GM12878 (cell line): ENCODE measurements at regions of chr3 and their contacts with region 1.

Region 1: DNA sequence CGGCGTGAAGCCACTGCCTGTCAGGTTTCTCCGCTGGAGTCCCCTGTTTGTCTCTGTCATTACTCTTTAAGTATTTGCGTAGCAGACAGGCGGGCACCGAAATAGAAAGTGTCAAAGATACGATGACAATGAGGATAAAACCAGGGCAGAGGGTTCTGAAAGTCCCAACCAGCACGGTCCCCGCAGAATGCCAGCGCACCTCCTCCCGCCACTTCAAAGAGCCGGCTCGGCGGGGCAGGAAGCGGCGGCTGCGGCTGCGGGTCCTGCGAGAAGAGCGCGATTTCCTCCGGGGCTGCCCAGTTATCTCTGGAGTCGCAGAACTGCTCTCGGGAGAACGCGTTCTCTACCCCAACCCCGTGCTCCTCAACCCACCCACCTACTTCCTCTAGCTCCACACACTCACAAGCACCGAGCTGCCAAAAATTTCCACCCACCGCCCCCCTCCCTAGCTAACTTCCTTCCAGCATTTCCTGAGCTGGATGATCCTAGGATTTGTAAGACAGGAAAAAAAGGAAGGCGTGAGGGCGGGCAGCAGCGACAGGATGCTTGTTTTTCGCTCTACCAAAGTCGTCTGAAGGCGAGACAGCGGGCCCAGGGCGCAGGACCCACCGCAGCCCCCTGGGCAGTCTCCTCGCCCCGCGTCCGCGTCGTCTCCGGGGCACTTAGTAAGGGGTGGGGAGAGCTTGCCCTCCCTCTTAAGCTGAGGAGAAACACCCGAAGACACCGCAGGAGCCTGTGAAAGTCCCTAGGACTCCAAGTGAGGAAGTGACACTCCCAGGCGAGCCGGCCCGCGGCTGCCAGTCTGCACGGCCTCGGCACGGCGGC is at the start of gene ARHGAP31:
- DNase-seq: peak; percentile 62
- ATAC-seq: peak; percentile 82
- H3K4me3 ChIP-seq: peak within 1 kb of the TSS; percentile 94
- H3K27ac ChIP-seq: peak within 1 kb of the TSS; percentile 96
- H3K4me1 ChIP-seq: peaks cover 27% of the 10 kb centered on the region
- H3K27me3 ChIP-seq: no peaks in the 10 kb centered on the region
- CTCF ChIP-seq: no peak
- EP300 ChIP-seq: peak in 1 of 2 experiments; percentile 14; a peak in 1 of 4 replicates
- POLR2A ChIP-seq: peak; percentile 81
- RAD21 ChIP-seq: no peak
- polyA plus RNA-seq, gene ARHGAP31: 0.97 to 1.6 TPM

Region 2: GRCh38 chr3:118408431-118408830 is 885.7 kb before region 1 on chr3:
- CTCF ChIA-PET with region 1: no interaction called
- POLR2A ChIA-PET with region 1: no interaction called
- RAD21 ChIA-PET with region 1: no interaction called
- SMC1A ChIA-PET with region 1: no interaction called
- in situ Hi-C with region 1: no loop called
- intact Hi-C with region 1: no loop called
- DNase-seq: no peak
- ATAC-seq: no peak
- H3K4me3 ChIP-seq: no peak overlapping the region
- H3K27ac ChIP-seq: no peak overlapping the region
- H3K4me1 ChIP-seq: no peaks in the 10 kb centered on the region
- H3K27me3 ChIP-seq: no peaks in the 10 kb centered on the region
- CTCF ChIP-seq: no peak
- EP300 ChIP-seq: no peak
- POLR2A ChIP-seq: no peak
- RAD21 ChIP-seq: no peak

Region 3: DNA sequence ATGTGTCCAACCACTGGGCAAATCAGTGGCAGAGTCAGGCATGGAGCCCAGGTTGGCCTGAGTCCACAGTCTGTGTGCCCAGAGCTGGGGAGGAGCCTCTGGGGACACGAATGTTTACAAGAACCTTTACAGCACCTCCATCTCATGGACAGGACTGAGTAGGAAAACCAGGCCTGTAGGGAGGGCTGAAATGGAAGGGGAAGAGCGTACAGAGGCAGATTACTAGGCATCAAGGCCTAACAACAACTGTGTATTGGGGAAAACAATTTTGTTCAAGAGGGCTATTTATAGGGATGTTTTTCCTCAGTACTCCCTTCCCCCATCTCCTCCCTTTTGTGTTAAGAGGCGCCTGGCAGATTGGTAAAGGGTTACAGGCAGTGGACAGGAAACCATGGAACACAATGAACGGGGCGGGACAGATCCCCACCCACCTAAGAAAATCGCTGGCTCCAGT is 15.0 kb before region 1 on chr3:
- CTCF ChIA-PET with region 1: interaction called, 11 read pairs
- POLR2A ChIA-PET with region 1: interaction called, 3 read pairs
- RAD21 ChIA-PET with region 1: interaction called, 3 read pairs
- SMC1A ChIA-PET with region 1: interaction called, 13 read pairs
- in situ Hi-C with region 1: no loop called
- intact Hi-C with region 1: no loop called
- DNase-seq: no peak
- ATAC-seq: no peak; the same call in 2 of the 3 replicates
- H3K4me3 ChIP-seq: no peak overlapping the region
- H3K27ac ChIP-seq: no peak overlapping the region
- H3K4me1 ChIP-seq: no peaks in the 10 kb centered on the region; the same call in 1 of the 2 replicates
- H3K27me3 ChIP-seq: no peaks in the 10 kb centered on the region
- CTCF ChIP-seq: no peak
- EP300 ChIP-seq: no peak
- POLR2A ChIP-seq: no peak
- RAD21 ChIP-seq: no peak

Region 4: DNA sequence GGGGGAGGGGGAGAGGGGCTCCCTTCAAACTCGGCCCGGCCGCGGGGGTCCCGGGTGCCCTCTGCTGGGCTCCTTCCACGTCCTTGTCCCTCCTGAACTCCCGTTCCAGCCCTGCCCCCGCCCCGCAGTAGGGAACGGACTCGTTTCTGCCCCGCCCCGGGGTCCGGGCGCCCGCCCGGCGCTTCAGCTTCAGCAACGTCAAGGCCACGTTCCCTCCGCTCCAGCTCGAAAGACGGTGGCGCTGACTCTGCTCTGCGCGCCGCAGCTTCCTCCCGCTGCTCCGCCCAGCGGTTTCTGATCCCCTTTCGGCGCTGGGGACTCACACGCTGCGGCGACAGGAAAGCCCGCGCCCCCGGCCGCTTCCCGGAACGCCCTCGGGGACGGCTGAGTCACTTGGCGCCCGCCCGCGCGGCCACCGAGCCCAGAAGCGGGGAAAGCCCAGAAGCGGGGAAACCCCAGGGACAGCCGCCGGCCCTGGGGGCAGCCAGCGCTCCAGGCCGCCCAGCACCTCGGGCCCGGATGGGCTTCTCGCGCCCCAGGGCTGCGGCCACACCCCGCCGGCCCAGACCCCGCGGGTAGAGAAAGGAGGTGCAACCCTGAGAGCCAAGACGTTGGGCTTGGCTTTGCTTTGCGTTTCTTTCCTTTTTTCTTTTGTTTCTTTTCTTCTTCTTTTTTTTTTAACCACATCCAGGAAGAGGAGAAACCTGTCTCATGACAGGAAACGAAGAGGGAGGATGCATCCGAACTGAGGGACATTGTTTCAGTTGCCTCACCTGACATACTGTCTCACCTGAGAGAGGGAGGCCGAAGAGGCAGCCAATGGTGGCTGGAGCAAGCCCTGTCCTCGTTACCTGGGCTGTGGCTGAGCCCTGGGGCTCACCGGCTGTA is 29.0 kb after region 1 on chr3:
- CTCF ChIA-PET with region 1: interaction called, 8 read pairs
- POLR2A ChIA-PET with region 1: interaction called, 25 read pairs
- RAD21 ChIA-PET with region 1: interaction called, 30 read pairs
- SMC1A ChIA-PET with region 1: interaction called, 32 read pairs
- in situ Hi-C with region 1: no loop called
- intact Hi-C with region 1: loop called (anchors 1 kb)
- DNase-seq: peak; percentile 73
- ATAC-seq: peak; percentile 92
- H3K4me3 ChIP-seq: peak overlapping the region; percentile 78
- H3K27ac ChIP-seq: peak overlapping the region; percentile 97
- H3K4me1 ChIP-seq: peaks cover 31% of the 10 kb centered on the region
- H3K27me3 ChIP-seq: no peaks in the 10 kb centered on the region
- CTCF ChIP-seq: no peak
- EP300 ChIP-seq: peak; percentile 72 to 87; a peak in 3 of 4 replicates
- POLR2A ChIP-seq: peak; percentile 95
- RAD21 ChIP-seq: no peak

Region 5: GRCh38 chr3:119359476-119360326 is 65.6 kb after region 1 on chr3:
- CTCF ChIA-PET with region 1: no interaction called
- POLR2A ChIA-PET with region 1: interaction called, 6 read pairs
- RAD21 ChIA-PET with region 1: no interaction called
- SMC1A ChIA-PET with region 1: interaction called, 13 read pairs
- in situ Hi-C with region 1: no loop called
- intact Hi-C with region 1: loop called (anchors 5 kb)
- DNase-seq: no peak
- ATAC-seq: peak; percentile 76
- H3K4me3 ChIP-seq: no peak overlapping the region
- H3K27ac ChIP-seq: no peak overlapping the region; the same call in 1 of the 2 replicates
- H3K4me1 ChIP-seq: peaks cover 16% of the 10 kb centered on the region
- H3K27me3 ChIP-seq: no peaks in the 10 kb centered on the region
- CTCF ChIP-seq: no peak
- EP300 ChIP-seq: no peak
- POLR2A ChIP-seq: no peak
- RAD21 ChIP-seq: peak; percentile 17; the same call in 1 of the 2 replicates

Region 6: GRCh38 chr3:119463171-119464169 is 169.4 kb after region 1 on chr3 and contains the start of gene TMEM39A:
- CTCF ChIA-PET with region 1: no interaction called
- POLR2A ChIA-PET with region 1: interaction called, 7 read pairs
- RAD21 ChIA-PET with region 1: interaction called, 7 read pairs
- SMC1A ChIA-PET with region 1: interaction called, 4 read pairs
- in situ Hi-C with region 1: no loop called
- intact Hi-C with region 1: loop called (anchors 10 kb)
- DNase-seq: peak; percentile 96
- ATAC-seq: peak; percentile 93
- H3K4me3 ChIP-seq: peak within 1 kb of the TSS; percentile 97
- H3K27ac ChIP-seq: peak within 1 kb of the TSS; percentile 90
- H3K4me1 ChIP-seq: peaks cover 9% of the 10 kb centered on the region
- H3K27me3 ChIP-seq: no peaks in the 10 kb centered on the region
- CTCF ChIP-seq: no peak
- EP300 ChIP-seq: peak; percentile 10 to 83; a peak in 2 of 4 replicates
- POLR2A ChIP-seq: peak; percentile 96
- RAD21 ChIP-seq: no peak
- polyA plus RNA-seq, gene TMEM39A: 10.8 to 21.2 TPM